Activated naive CD4-positive, alpha-beta T cell treated with anti-CD3 and anti-CD28 coated beads for 36 hours (primary cell): ENCODE measurements at regions of chr16 and their contacts with region 1.

Region 1: GRCh38 chr16:15572329-15573001 is 70.5 kb downstream of the MARF1 start:
- DNase-seq: peak; percentile 59
- H3K4me3 Mint-ChIP-seq: no peak overlapping the region
- H3K27ac Mint-ChIP-seq: peak overlapping the region; percentile 17
- H3K4me1 Mint-ChIP-seq: peaks cover 32% of the 10 kb centered on the region
- H3K27me3 Mint-ChIP-seq: no peaks in the 10 kb centered on the region

Region 2: DNA sequence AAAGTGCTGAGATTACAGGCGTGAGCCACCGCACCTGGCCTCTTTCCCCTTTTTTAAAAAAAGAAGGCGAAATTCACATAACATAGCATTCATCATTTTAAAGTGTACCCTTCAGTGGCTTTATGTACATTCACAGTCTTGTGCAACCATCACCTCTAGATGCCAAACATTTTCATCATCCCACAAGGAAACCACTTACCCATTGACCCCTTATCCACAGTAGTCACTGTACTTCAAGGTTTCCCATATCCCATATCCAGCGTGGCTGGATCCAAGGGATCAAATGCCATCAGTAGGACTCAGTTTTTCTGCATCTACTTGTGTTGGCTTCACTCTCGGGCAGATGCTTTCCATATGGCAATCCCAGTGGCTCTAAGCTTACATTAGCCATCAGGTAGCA is 87.8 kb before region 1 on chr16:
- CTCF ChIA-PET with region 1: no interaction called
- intact Hi-C with region 1: loop called (anchors 5 kb)
- DNase-seq: no peak
- H3K4me3 Mint-ChIP-seq: no peak overlapping the region
- H3K27ac Mint-ChIP-seq: no peak overlapping the region
- H3K4me1 Mint-ChIP-seq: peaks cover 26% of the 10 kb centered on the region
- H3K27me3 Mint-ChIP-seq: no peaks in the 10 kb centered on the region

Region 3: GRCh38 chr16:15553313-15554088 is 19.0 kb before region 1 on chr16:
- CTCF ChIA-PET with region 1: interaction called, 3 read pairs
- intact Hi-C with region 1: loop called (anchors 2 kb)
- DNase-seq: peak; percentile 65
- H3K4me3 Mint-ChIP-seq: no peak overlapping the region
- H3K27ac Mint-ChIP-seq: peak overlapping the region; percentile 7
- H3K4me1 Mint-ChIP-seq: peaks cover 26% of the 10 kb centered on the region
- H3K27me3 Mint-ChIP-seq: no peaks in the 10 kb centered on the region

Region 4: DNA sequence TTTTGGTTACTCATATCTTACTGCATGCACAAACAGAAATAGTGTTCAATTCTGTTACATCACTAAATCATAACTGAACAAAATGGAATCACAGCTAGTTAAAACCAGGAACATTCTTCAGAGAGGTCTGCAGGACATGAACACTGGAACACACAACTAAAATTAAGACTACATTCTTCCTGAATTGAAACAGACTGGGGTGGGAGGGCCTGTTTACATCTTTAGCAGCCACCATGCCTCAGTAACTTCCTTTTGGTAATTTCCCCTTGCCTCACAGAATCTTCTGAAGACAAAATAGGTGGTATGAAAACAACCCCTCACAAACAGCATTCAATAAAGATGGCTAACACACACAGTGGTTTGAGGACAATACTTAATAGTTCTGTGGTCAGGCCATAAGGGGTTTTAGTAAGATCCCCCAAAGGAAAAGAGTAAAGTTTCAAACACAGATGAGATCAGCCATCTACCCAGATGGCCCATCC is 64.0 kb after region 1 on chr16:
- CTCF ChIA-PET with region 1: no interaction called
- intact Hi-C with region 1: loop called (anchors 1 kb)
- DNase-seq: peak; percentile 27
- H3K4me3 Mint-ChIP-seq: no peak overlapping the region
- H3K27ac Mint-ChIP-seq: peak overlapping the region; percentile 88
- H3K4me1 Mint-ChIP-seq: peaks cover 77% of the 10 kb centered on the region
- H3K27me3 Mint-ChIP-seq: no peaks in the 10 kb centered on the region